ENCODE measurements at regions of chr1 and their contacts with region 1.

Region 1: DNA sequence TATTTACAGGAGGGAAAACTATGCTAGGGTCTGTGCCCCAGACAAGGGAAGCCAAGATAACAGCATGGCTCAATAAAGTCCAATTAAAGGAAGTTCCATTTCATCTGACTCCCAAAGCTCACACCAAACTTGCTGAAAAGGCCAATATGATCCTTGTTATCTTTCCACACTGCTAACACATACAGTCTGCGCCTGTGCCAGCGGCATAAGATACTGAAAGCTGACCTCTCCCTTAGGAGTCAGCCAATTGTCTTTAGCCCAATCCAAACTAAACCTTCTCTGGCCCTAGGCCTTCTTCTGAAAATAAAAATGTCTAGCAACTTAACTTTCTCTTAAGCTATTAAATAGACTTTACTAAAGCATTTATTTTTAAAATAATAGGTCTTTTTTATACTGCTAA is 179.0 kb upstream of the PLD5 start:
- DNase-seq: no peak
- ATAC-seq: no peak
- H3K4me3 Mint-ChIP-seq: no peak overlapping the region
- H3K27ac Mint-ChIP-seq: no peak overlapping the region
- H3K4me1 Mint-ChIP-seq: no peaks in the 10 kb centered on the region
- H3K27me3 Mint-ChIP-seq: peaks cover 4% of the 10 kb centered on the region

Region 2: DNA sequence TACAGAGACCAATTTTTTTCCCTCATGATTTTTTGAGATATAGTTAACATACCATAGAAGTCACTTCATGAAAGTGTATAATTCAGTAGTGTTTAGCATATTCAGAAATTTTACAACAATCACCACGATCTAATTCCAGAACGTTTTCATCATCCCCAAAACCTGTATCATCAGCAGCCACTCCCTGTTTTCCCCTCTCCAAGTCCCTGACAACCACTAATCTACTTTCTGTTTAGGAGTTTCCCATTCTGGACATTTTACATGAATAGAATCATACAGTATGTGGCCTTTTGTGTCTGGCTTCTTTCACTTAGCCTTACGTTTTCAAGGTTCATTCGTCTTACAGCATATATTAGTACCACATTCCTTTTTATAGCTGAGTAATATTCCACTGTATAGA is 25.2 kb after region 1 on chr1:
- CTCF ChIA-PET with region 1: no interaction called
- POLR2A ChIA-PET with region 1: no interaction called
- intact Hi-C with region 1: loop called in 1 of 2 experiments (anchors 2 kb)
- DNase-seq: no peak
- ATAC-seq: no peak
- H3K4me3 Mint-ChIP-seq: no peak overlapping the region
- H3K27ac Mint-ChIP-seq: no peak overlapping the region
- H3K4me1 Mint-ChIP-seq: no peaks in the 10 kb centered on the region
- H3K27me3 Mint-ChIP-seq: no peaks in the 10 kb centered on the region

Measured in activated CD4-positive, alpha-beta T cell treated with anti-CD3 and anti-CD28 coated beads for 36 hours (primary cell).